Gastrocnemius medialis (tissue), 4 donors: ENCODE measurements at regions of chr6 and their contacts with region 1.

Region 1: GRCh38 chr6:13328076-13328874 is at the start of gene TBC1D7:
- DNase-seq: peak; percentile 83 to 91
- ATAC-seq: peak; percentile 98 to 99
- H3K4me3 ChIP-seq: peak within 1 kb of the TSS; percentile 89 to 98 (median 94)
- H3K27ac ChIP-seq: peak within 1 kb of the TSS; percentile 90 to 97 (median 96)
- H3K4me1 ChIP-seq: peaks cover 13 to 19% of the 10 kb centered on the region in 2 donors
- H3K27me3 ChIP-seq: no peaks in the 10 kb centered on the region
- CTCF ChIP-seq: peak in 2 of 5 experiments; percentile 9 to 24
- POLR2A ChIP-seq: peak; percentile 83 to 84
- total RNA-seq, gene TBC1D7: 5.7 to 14.9 (median 6.6) TPM

Region 2: GRCh38 chr6:12911387-12911960 is 416.8 kb before region 1 on chr6:
- in situ Hi-C with region 1: loop called in 3 of 4 experiments (anchors 10 to 25 kb)
- intact Hi-C with region 1: loop called (anchors 2 kb)
- DNase-seq: no peak
- ATAC-seq: no peak
- H3K4me3 ChIP-seq: no peak overlapping the region
- H3K27ac ChIP-seq: no peak overlapping the region
- H3K4me1 ChIP-seq: no peaks in the 10 kb centered on the region
- H3K27me3 ChIP-seq: no peaks in the 10 kb centered on the region
- CTCF ChIP-seq: peak in 2 of 5 experiments; percentile 19 to 34
- POLR2A ChIP-seq: no peak

Region 3: GRCh38 chr6:13194852-13195251 is 133.4 kb before region 1 on chr6:
- in situ Hi-C with region 1: no loop called
- intact Hi-C with region 1: loop called (anchors 5 kb)
- DNase-seq: peak in 1 of 2 donors; percentile 14
- ATAC-seq: no peak
- H3K4me3 ChIP-seq: no peak overlapping the region
- H3K27ac ChIP-seq: no peak overlapping the region
- H3K4me1 ChIP-seq: no peaks in the 10 kb centered on the region
- H3K27me3 ChIP-seq: no peaks in the 10 kb centered on the region
- CTCF ChIP-seq: peak in 2 of 5 experiments; percentile 24 to 25
- POLR2A ChIP-seq: no peak

Region 4: GRCh38 chr6:13395272-13396237 is 67.3 kb after region 1 on chr6:
- in situ Hi-C with region 1: no loop called
- intact Hi-C with region 1: loop called (anchors 5 kb)
- DNase-seq: peak in 1 of 2 donors; percentile 40
- ATAC-seq: peak; percentile 49 to 74
- H3K4me3 ChIP-seq: no peak overlapping the region
- H3K27ac ChIP-seq: peak overlapping the region; percentile 39 to 52 (median 41)
- H3K4me1 ChIP-seq: peaks cover 24 to 38% of the 10 kb centered on the region in 2 donors
- H3K27me3 ChIP-seq: no peaks in the 10 kb centered on the region
- CTCF ChIP-seq: no peak
- POLR2A ChIP-seq: no peak

Region 5: DNA sequence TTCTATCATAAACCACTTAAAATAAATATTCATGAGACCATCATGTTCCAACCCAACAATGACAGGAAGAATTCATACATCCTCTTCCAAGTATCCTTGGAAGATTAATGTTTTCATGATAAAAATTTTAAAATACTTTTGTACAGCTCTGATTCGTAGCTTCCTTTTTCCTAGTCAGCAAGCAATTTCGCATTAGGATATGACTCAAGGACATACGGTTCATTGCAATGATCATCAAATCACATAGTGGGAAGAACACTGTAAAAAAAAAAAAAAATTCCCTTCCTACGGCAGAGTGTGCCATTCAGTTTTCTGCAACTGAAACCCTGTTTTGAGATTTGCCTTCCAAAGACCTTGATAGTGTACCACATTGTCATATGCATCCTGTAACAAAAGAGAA is 194.4 kb after region 1 on chr6:
- in situ Hi-C with region 1: no loop called
- intact Hi-C with region 1: no loop called
- DNase-seq: no peak
- ATAC-seq: no peak
- H3K4me3 ChIP-seq: no peak overlapping the region
- H3K27ac ChIP-seq: peak overlapping the region; percentile 80 to 100 (median 88)
- H3K4me1 ChIP-seq: peaks cover 44 to 47% of the 10 kb centered on the region in 2 donors
- H3K27me3 ChIP-seq: no peaks in the 10 kb centered on the region
- CTCF ChIP-seq: no peak
- POLR2A ChIP-seq: no peak

Region 6: GRCh38 chr6:13614926-13615798 is 286.9 kb after region 1 on chr6 and contains the start of gene NOL7:
- in situ Hi-C with region 1: no loop called
- intact Hi-C with region 1: loop called (anchors 1 kb)
- DNase-seq: peak; percentile 97 to 98
- ATAC-seq: peak; percentile 95 to 97
- H3K4me3 ChIP-seq: peak within 1 kb of the TSS; percentile 68 to 95 (median 78)
- H3K27ac ChIP-seq: peak within 1 kb of the TSS; percentile 84 to 91 (median 88)
- H3K4me1 ChIP-seq: peaks cover 21 to 34% of the 10 kb centered on the region in 2 donors
- H3K27me3 ChIP-seq: no peaks in the 10 kb centered on the region
- CTCF ChIP-seq: peak; percentile 88 to 93 (median 92)
- POLR2A ChIP-seq: peak; percentile 67 to 73
- total RNA-seq, gene NOL7: 44.9 to 69.0 (median 63.8) TPM

Region 7: DNA sequence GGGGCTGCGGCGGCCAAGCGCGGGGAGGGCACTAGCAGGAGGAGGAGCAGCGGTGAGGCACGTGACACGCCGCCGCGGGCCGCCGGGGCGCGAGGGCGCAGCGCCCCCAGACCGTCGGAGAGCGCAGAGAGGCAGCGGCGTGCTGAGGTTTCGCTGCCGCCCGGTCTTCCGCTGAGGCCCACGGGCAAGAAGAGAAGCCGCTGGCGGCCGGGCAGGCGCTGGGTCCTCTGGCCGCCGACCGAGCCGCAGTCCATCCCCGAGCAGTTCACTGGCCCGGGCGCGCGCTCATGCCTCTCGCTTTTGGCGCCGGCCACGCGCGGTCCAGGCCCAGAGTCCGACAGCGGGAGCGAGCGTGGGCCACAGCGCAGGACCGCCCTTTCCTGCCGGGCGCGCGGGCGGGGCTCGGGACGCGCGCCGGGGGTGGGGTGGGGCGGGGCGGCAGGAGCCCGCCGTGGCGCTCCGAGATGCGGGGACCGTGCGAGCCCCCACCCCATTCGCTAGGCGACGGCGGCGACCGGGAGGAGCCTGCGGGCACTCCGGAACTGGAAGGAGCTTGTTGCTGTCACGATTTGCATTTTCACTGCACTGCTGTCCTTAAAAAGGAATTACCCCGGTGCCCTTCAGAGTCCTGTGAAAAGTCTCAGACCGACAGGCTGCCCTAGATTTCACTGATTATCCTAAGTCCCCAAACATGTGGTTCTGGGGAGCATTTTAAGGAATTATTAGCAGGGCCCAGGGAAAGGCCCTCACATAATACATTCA is 486.1 kb after region 1 on chr6 and contains the start of gene MCUR1:
- in situ Hi-C with region 1: no loop called
- intact Hi-C with region 1: loop called (anchors 5 kb)
- DNase-seq: peak; percentile 75 to 84
- ATAC-seq: peak; percentile 88 to 92
- H3K4me3 ChIP-seq: peak within 1 kb of the TSS; percentile 74 to 98 (median 82)
- H3K27ac ChIP-seq: peak within 1 kb of the TSS; percentile 92 to 99 (median 98)
- H3K4me1 ChIP-seq: peaks cover 30 to 31% of the 10 kb centered on the region in 2 donors
- H3K27me3 ChIP-seq: no peaks in the 10 kb centered on the region
- CTCF ChIP-seq: peak in 3 of 5 experiments; percentile 29 to 50 (median 36)
- POLR2A ChIP-seq: peak; percentile 86 to 88
- total RNA-seq, gene MCUR1: 9.5 to 29.4 (median 18.1) TPM

Region 8: GRCh38 chr6:14066782-14067406 is 738.6 kb after region 1 on chr6:
- in situ Hi-C with region 1: loop called in 1 of 4 experiments (anchors 25 kb)
- intact Hi-C with region 1: no loop called
- DNase-seq: no peak
- ATAC-seq: peak; percentile 56 to 78
- H3K4me3 ChIP-seq: no peak overlapping the region
- H3K27ac ChIP-seq: no peak overlapping the region
- H3K4me1 ChIP-seq: no peaks in the 10 kb centered on the region
- H3K27me3 ChIP-seq: peaks cover 0 to 10% (median 4%) of the 10 kb centered on the region in 3 donors
- CTCF ChIP-seq: peak; percentile 54 to 70 (median 62)
- POLR2A ChIP-seq: no peak